Mammary epithelial cell (primary cell): ENCODE measurements at regions of chr16 and their contacts with region 1.

Region 1: DNA sequence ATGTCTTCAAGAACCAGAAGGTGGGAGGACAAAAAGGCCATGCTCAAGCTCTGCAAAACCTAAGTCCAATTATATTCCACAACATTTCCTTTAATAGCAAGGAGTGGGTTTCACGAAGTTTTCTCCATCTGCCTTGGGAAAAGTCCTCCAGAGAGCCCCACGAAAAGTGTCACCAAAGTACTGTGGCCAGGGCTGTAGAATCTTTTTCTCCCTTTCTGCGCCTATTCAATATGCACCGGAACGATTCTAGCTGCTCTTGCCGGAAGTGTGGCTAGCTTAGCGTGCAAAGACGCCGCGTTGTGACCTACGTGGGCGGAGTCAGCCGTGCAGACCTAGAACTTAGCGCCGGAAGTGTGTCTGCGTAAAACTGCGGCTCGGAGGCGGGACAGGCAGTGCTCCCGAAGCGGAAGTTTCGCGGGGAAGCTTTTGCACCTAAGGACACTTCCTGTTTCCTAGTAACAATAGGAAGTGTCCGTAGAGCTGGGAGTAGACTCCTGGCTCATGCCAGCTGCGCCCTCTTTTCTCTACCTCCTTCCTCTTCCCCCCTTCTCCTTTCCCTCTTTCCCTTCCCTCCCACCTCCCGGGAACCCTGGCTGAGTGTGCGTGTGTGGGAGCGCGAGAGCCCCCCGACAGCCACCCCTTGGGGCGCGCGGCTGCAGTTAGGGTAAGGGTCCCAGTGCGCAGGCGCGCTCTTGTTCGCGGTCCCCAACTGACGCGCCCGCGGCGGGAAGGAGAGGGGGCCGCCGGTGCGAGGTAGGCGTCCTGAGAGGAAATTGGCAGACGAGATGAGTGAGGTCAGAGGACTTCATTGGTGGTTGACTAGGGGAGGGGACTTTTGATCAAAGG is at the starts of genes ZNF646 and ZNF668:
- DNase-seq: peak; percentile 98
- H3K4me3 ChIP-seq: peak within 1 kb of the TSS; percentile 75 to 100 (median 98)
- H3K27ac ChIP-seq: peak within 1 kb of the TSS; percentile 73
- H3K4me1 ChIP-seq: peaks cover 14% of the 10 kb centered on the region
- H3K27me3 ChIP-seq: no peaks in the 10 kb centered on the region
- CTCF ChIP-seq: no peak
- total RNA-seq, gene ZNF646: 15.4 to 15.5 TPM
- total RNA-seq, gene ZNF668: 13.2 to 14.7 TPM

Region 2: DNA sequence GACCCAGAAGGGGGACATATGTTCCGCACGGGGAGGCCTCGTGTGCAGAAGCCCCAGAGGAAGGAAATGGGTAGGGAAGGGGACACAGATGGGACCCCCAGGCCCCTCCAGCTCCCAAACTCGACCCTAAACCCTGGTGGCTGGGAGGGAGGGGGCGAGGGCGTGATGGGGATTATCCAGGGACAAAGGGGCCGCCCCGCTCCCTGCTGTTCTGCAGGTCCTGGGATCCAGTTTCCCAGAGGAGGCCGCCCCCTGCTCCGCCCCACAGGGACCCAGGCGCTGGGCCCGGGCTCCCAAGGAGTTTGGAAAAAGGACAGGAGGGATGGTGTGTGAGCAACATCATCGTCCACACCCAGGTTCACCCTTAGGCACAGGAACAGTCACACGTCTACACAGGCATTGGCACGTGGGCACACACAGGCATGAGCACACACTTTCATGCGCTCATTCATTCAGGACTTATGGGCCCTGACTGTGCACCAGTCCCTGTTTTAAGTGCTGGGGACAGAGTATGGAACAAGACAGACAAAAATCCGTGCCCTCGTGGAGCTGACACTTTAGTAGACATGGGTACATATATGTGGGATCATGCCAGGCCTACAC is 163.7 kb before region 1 on chr16:
- CTCF ChIA-PET with region 1: no interaction called
- dilution Hi-C with region 1: no loop called
- in situ Hi-C with region 1: no loop called
- intact Hi-C with region 1: no loop called
- DNase-seq: no peak
- H3K4me3 ChIP-seq: no peak overlapping the region
- H3K27ac ChIP-seq: no peak overlapping the region
- H3K4me1 ChIP-seq: no peaks in the 10 kb centered on the region
- H3K27me3 ChIP-seq: no peaks in the 10 kb centered on the region
- CTCF ChIP-seq: no peak

Region 3: DNA sequence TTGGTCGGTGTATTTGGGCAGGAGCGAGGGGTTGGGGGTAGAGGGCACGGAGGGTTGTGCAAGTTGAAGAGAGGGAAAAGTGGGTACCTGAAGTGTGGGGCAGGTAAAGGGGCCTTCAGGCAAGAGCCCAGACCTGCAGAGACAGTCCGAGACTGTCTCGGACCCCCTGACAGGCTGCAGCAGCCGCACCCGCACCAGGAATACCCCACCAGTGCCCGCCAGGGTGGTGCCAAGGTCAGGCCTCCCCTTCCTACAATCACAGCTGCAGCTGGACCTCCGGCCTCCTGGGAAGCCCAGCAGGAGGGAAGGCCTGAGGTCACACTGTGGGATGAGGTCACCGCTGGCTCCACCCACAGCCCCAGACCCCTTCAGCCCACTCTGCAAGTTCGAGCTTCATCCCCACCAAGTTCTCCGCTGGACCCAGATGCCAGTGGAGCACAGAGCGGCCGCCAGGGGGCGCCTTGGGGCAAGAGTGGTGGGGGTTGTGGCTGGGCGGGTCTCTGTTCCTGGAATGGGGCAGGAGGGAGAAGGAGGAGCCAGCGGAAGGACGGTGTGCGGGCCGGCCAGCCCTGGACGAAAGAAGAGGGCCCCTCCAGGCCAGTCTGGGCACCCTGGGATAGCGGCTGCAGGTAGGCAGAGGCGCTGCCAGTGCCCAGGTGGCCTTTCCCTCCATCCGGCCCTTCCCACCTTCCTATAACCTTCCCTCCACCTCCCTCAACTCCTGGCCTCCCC is 89.4 kb before region 1 on chr16 and contains the start of gene HSD3B7:
- CTCF ChIA-PET with region 1: interaction called, 4 read pairs
- dilution Hi-C with region 1: no loop called
- in situ Hi-C with region 1: loop called (anchors 10 kb)
- intact Hi-C with region 1: loop called (anchors 1 kb)
- DNase-seq: peak; percentile 64
- H3K4me3 ChIP-seq: peak within 1 kb of the TSS; percentile 22 to 54 (median 44)
- H3K27ac ChIP-seq: no peak within 1 kb of the TSS
- H3K4me1 ChIP-seq: peaks cover 12% of the 10 kb centered on the region
- H3K27me3 ChIP-seq: no peaks in the 10 kb centered on the region
- CTCF ChIP-seq: peak; percentile 84 to 96
- total RNA-seq, gene HSD3B7: 3.8 to 3.9 TPM

Region 4: DNA sequence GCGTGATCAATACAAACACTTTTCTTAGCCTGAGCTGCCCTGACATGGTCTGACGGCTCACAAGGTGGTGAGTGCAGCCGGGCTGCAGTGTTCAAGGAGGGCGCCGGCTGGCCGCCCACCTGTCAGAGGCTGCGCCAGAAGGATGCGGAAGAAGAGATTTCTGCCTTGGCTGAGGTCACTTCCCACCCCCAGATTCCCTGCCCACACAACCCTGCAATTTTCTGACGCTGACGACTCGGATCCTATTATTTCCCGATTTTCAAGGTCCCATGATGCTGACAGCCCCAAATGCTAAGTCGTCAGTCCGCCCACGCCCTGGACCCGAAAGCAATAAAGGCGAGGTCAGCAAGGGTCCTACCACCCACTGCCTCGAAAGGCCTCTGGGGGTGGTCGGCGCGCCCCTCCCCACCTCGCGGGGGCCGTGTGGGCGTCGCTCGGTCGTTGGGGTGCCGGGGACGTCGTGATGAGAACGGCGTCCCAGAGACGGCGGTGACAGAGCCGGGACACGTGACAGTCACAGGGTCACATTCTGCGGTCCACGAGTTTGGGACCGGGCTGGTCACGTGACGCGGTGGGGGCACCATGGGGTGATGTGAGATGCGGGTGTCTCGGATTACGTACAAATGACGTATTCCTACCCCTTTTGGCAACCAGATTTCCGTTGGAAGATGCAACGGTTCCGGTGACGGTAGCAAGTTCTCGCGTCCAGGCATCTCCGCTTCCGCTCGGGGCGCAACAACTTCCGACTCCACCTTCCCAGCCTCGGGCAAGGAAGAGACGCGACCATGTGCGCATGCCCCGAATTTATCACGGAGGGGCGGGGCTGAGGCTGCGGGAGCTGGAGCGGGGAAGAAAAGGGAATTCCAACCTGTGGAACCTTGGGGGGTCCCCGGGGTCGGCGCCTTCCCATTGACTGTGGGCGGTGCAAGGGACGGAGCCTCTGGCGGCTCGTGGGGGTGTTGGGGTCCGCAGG is 41.2 kb before region 1 on chr16 and contains the start of gene STX4:
- CTCF ChIA-PET with region 1: no interaction called
- dilution Hi-C with region 1: loop called (anchors 5 kb)
- in situ Hi-C with region 1: no loop called
- intact Hi-C with region 1: loop called (anchors 1 kb)
- DNase-seq: peak; percentile 95
- H3K4me3 ChIP-seq: peak within 1 kb of the TSS; percentile 82 to 94 (median 89)
- H3K27ac ChIP-seq: peak within 1 kb of the TSS; percentile 78
- H3K4me1 ChIP-seq: peaks cover 12% of the 10 kb centered on the region
- H3K27me3 ChIP-seq: no peaks in the 10 kb centered on the region
- CTCF ChIP-seq: no peak
- total RNA-seq, gene STX4: 13.3 to 64.3 TPM

Region 5: DNA sequence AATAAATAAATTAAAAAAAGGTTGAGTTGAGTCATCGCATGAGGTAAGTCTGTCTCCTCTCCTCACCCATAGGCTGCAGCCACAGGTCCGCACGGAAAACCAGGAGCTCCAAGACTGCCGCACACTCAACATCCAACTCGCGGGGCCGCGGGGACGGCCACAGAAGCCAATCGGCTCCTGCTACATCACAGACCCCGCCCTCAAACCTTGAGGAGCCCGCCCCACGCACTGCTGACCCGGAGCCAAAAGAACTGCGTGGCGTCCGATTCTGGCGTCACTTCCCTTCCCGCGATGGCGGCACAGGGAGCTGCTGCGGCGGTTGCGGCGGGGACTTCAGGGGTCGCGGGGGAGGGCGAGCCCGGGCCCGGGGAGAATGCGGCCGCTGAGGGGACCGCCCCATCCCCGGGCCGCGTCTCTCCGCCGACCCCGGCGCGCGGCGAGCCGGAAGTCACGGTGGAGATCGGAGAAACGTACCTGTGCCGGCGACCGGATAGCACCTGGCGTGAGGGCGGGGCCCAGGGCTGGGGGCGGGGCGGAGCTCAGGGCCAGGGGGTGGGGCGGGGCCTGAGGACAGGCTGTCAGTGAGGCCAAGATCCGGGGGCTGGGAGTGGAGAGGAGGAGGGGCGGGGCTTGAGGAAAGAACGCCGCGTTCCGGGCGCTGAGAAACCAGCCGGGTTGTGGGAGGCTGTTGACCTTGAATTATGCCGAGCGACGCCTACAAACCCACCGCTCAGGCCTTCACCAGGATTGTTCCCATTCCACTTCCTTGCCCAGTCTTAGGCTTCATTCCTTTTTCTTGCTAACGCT is 43.4 kb after region 1 on chr16 and contains the start of gene KAT8:
- CTCF ChIA-PET with region 1: no interaction called
- dilution Hi-C with region 1: loop called (anchors 5 kb)
- in situ Hi-C with region 1: no loop called
- intact Hi-C with region 1: no loop called
- DNase-seq: peak; percentile 98
- H3K4me3 ChIP-seq: peak within 1 kb of the TSS; percentile 57 to 80 (median 65)
- H3K27ac ChIP-seq: peak within 1 kb of the TSS; percentile 100
- H3K4me1 ChIP-seq: peaks cover 14% of the 10 kb centered on the region
- H3K27me3 ChIP-seq: no peaks in the 10 kb centered on the region
- CTCF ChIP-seq: no peak
- total RNA-seq, gene KAT8: 22.7 to 34.0 TPM

Region 6: DNA sequence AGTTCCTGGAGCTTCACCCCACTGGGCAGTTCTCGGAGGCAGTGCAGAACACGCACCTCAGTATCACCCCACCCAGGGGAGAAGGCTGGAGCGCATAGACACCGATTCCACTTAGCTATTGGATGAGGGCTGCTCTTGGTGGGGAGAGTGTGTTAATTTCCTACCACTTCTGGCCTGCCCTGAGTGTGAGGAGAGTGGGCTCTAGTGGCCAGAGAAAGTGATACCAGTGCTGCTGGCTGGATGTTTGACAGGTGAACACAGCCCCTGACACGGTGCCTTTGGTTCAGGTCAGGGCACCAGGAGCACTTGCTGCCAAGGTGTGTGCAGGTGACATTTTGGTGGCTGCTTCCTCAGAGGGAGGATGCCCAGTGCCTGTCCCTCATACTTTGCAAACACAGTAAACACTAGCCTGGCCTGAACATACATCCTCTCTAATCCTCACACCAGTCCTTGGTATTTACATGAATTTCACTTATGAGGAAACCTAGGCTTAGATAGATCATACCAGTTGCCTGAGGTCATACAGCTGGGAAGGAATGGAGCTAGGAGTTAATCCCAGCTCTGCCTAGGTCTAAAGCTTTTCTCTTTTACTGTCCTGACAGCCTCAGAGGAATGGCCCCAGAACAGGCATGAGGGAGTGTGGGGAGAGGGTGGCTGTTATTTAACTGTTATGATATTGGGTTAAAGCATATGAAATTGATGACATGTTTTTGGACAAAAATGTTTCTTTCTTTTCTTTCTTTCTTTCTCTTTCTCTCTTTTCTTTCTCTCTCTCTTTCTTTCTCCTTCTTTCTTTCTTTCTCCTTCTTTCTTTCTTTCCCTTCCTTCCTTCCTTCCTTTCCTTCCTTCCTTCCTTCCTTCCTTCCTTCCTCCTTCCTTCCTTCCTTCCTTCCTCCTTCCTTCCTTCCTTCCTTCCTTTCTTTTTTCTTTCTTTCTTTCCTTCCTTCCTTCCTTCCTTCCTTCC is 259.8 kb after region 1 on chr16:
- CTCF ChIA-PET with region 1: no interaction called
- dilution Hi-C with region 1: loop called (anchors 10 kb)
- in situ Hi-C with region 1: no loop called
- intact Hi-C with region 1: no loop called
- DNase-seq: peak; percentile 17
- H3K4me3 ChIP-seq: no peak overlapping the region
- H3K27ac ChIP-seq: no peak overlapping the region
- H3K4me1 ChIP-seq: peaks cover 6% of the 10 kb centered on the region
- H3K27me3 ChIP-seq: peaks cover 22% of the 10 kb centered on the region
- CTCF ChIP-seq: peak; percentile 37 to 63